ENCODE measurements at regions of chr10 and their contacts with region 1.

Region 1: GRCh38 chr10:101042667-101043355 is 11.8 kb downstream of the SFXN3 start:
- DNase-seq: peak; percentile 88
- ATAC-seq: peak; percentile 90
- H3K4me3 ChIP-seq: peak overlapping the region; percentile 50 to 76 (median 68)
- H3K4me3 Mint-ChIP-seq: peak overlapping the region; percentile 100
- H3K27ac ChIP-seq: peak overlapping the region in 1 of 2 donors; percentile 76
- H3K27ac Mint-ChIP-seq: peak overlapping the region; percentile 90
- H3K4me1 ChIP-seq: peaks cover 6 to 15% of the 10 kb centered on the region in 2 donors
- H3K4me1 Mint-ChIP-seq: peaks cover 17% of the 10 kb centered on the region
- H3K27me3 ChIP-seq: peaks cover 0 to 22% (median 6%) of the 10 kb centered on the region in 4 experiments
- H3K27me3 Mint-ChIP-seq: peaks cover 19% of the 10 kb centered on the region
- CTCF ChIP-seq: no peak

Region 2: GRCh38 chr10:101067356-101068083 is 24.7 kb after region 1 on chr10:
- CTCF ChIA-PET with region 1: interaction called, 306 read pairs
- POLR2A ChIA-PET with region 1: interaction called, 20 read pairs
- intact Hi-C with region 1: loop called (anchors 1 kb)
- DNase-seq: peak; percentile 83
- ATAC-seq: peak; percentile 63
- H3K4me3 ChIP-seq: peak overlapping the region; percentile 28 to 80 (median 71)
- H3K4me3 Mint-ChIP-seq: peak overlapping the region; percentile 98
- H3K27ac ChIP-seq: no peak overlapping the region
- H3K27ac Mint-ChIP-seq: peak overlapping the region; percentile 66
- H3K4me1 ChIP-seq: peaks cover 50 to 53% of the 10 kb centered on the region in 2 donors
- H3K4me1 Mint-ChIP-seq: peaks cover 52% of the 10 kb centered on the region
- H3K27me3 ChIP-seq: peaks cover 0 to 49% (median 21%) of the 10 kb centered on the region in 4 experiments
- H3K27me3 Mint-ChIP-seq: peaks cover 25% of the 10 kb centered on the region
- CTCF ChIP-seq: peak; percentile 95

Measured in B cell (primary cell).